ENCODE measurements at regions of chr4 and their contacts with region 1.

Region 1: GRCh38 chr4:56387023-56388001 is at the start of gene AASDH:
- DNase-seq: peak; percentile 90

Region 2: DNA sequence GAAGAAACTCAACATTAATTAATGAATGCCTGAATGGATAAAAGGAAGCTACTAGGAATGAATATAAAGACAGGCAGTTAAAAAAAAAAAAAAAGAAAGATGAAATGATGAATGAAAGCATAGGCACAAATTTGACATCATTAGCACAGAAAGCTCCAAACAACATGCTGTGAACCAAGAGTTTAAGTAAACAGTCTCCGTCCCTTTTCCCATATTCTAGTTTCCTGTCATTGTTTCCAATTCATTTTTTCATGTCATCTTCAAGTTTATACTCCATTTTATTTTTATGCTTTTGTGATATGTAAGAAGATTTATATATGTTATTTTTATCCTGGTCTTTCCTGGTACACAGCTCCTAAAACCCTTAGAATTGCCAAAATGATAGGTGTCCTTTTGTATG is 17.7 kb after region 1 on chr4:
- CTCF ChIA-PET with region 1: no interaction called
- POLR2A ChIA-PET with region 1: interaction called, 27 read pairs
- DNase-seq: no peak

Region 3: DNA sequence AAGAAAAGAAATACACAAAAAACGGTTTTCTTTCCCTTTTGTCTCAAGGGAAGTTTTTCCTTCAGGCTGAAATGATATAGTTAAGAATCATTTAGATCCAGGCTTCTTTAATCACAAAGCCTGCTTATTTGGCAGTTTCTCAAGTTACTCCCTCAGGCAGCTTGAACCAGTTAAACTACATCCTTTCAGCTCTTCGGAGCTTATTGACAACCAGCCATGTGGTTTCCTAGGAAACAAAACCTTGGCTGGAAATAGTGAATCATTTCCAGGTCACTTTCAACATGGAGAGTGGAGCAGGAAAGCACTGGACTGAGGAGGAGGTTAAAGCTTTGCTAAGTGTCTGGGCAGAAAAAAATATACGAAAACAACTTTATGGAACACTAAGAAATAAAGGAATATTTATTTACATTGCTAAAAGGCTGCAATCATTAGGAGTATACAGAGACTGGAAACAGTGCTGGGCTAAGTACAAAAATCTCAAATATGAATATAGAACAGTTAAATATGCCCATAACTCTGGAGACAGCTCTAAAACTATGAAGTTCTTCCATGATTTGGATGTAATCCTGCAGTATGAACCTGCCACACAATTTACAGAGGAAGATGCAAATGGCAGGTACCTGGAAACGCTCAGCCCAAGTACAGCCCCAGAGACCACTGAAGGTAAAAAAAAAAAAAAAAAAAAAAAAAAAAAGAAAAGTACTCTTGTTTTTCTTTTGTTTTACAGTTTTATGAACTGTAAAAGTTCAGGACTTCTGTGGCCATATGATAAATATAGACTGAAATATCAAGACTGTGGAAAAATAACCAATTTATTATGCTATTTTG is 23.1 kb after region 1 on chr4:
- CTCF ChIA-PET with region 1: no interaction called
- POLR2A ChIA-PET with region 1: interaction called, 27 read pairs
- DNase-seq: peak; percentile 59

Region 4: GRCh38 chr4:56417396-56417795 is 30.1 kb after region 1 on chr4:
- CTCF ChIA-PET with region 1: no interaction called
- POLR2A ChIA-PET with region 1: interaction called, 13 read pairs
- DNase-seq: no peak

Region 5: DNA sequence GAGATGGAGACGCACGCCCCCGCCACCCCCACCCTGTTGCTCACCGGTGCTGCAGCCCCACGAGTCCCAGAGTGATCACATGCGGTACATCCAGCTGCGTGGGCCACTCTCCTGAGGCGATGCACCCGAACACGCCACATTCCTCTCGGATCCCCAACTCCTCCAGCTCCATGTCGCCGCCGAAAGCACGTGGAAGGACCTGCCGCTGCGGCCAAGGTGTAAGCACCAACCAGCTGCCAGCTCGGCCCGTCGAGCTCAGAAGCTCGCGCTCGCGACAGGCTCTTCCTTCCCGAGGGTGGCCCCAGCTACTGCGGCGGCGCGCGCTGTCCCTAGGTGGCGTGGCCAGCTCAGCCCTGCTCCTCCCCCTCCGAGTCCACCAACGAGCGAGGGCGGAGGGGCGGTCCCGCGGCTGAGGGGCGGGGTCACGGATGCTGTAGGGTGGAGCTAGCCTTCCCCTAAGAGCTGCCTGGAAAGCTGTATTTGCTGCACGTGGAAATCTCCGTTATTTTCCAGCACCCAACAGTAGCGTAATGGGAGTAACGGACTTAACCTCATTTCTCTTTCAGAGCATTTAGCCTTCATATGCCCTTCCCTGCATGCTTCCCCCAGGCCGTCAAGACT is 48.1 kb after region 1 on chr4 and contains the start of gene PPAT:
- CTCF ChIA-PET with region 1: no interaction called
- POLR2A ChIA-PET with region 1: interaction called, 113 read pairs
- DNase-seq: peak; percentile 90

Region 6: GRCh38 chr4:56467284-56468096 is 80.2 kb after region 1 on chr4 and contains the start of gene SRP72:
- CTCF ChIA-PET with region 1: no interaction called
- POLR2A ChIA-PET with region 1: interaction called, 12 read pairs
- DNase-seq: peak; percentile 88

Measured in HEK293T (cell line).